Vagina (tissue), 2 donors: ENCODE measurements at regions of chr1 and their contacts with region 1.

Region 1: GRCh38 chr1:18062180-18062579 is 45.4 kb upstream of the IGSF21 start:
- DNase-seq: no peak
- H3K4me3 ChIP-seq: no peak overlapping the region
- H3K27ac ChIP-seq: no peak overlapping the region
- H3K4me1 ChIP-seq: no peaks in the 10 kb centered on the region
- H3K27me3 ChIP-seq: peaks cover 6% of the 10 kb centered on the region
- CTCF ChIP-seq: no peak
- POLR2A ChIP-seq: no peak

Region 2: DNA sequence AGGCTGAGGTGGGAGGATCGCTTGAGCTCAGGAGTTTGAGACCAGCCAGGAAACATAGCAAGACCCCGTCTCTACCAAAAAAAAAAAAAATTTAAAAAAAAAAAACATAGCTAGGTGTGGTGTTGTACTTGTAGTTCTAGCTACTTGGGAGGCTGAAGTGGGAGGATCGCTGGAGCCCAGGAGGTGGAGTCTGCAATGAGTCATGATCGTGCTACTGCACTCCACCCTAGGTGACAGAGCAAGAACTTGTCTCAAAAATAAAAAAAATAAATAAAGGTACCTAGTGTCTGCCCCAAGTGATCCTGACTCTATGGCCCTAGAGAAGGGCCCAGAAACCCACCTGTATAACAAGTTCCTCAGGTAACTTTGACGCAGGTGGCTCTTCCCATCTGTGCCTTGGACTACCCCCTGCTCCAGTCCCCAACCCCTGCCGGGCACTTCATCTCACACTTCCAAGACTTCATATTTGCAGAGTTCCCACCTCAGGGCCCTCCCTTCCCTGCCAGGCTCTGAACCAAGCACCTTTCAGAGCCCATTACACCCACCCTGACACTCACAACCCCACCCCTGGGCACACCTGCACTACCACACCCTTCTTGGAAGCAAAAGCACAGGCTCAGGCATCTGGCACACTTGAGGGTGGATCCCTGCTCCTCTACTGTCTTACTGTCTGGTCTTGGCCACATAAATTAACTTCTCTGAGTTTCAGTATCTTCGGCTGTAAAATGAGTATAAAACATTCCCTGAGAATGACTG is 338.3 kb after region 1 on chr1:
- intact Hi-C with region 1: loop called (anchors 5 kb)
- DNase-seq: no peak
- H3K4me3 ChIP-seq: no peak overlapping the region
- H3K27ac ChIP-seq: no peak overlapping the region
- H3K4me1 ChIP-seq: no peaks in the 10 kb centered on the region
- H3K27me3 ChIP-seq: no peaks in the 10 kb centered on the region
- CTCF ChIP-seq: no peak
- POLR2A ChIP-seq: no peak